ENCODE measurements at regions of chr2 and their contacts with region 1.

Region 1: DNA sequence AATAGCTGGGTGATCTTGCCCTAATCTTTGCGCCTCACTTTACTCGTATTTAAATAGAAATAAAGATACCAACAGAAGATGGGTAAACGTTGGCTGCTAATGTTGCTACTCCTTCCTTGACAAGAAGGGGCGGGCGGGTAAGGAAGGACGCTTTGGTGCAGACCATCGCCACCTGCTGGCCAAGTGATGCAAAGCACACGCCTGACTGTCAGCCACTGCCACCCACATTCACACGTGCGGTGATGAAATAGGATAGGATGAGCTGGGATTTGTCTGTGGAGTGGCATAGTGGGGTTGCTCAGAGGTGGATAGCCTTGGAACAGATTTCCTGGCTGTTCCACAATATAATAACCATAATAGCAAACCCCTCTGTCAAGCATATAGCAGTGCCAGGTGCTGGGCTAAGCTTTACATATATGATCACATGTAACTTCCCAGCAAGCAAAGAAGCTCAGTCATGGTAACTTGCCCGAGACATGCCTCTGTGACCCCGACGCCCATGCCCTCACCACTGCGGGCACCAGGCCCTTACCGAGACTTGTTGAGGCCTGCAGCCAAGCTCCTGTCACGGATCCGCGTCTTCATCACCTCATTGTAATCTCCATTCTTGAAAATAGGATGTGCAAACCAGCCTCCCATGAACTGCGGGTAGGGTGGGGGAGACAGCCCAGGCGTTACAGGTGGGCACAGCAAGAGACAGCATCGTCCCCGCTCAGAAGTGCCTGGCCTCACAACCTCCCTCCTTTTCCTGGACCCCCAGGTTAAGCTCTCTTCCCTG is 39.3 kb downstream of the LCT start:
- DNase-seq: peak; percentile 48
- ATAC-seq: peak; percentile 90
- H3K4me3 ChIP-seq: no peak overlapping the region
- H3K27ac ChIP-seq: no peak overlapping the region
- H3K4me1 ChIP-seq: no peaks in the 10 kb centered on the region
- H3K27me3 ChIP-seq: no peaks in the 10 kb centered on the region
- CTCF ChIP-seq: peak; percentile 97

Region 2: DNA sequence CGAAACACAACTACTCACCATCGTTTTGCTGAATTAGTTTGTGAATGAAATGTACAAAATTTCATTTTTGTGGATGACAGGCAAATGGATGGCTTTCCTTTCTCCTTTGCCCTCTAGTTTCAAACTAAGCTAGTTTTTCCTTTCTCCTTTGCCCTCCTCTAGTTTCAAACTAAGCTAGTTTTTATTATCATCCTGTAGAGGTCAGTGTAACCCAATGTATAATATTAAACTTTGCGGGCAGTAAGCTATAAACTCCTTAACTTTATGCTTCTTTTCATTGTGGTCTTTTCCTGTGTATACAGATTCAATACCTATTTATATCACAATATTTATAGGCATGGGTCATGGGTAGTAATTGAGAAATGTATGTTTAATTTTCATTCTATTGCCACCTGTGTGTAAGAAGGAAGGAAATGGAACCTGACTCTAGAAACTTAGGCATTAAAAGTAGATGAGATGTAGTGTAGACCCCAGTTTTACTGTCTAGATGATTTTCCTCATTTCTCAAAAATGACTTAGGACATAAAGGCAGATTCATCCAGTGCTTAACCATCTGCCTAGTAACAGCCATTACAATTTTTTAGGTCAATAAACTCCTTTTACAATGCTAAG is 808.6 kb before region 1 on chr2:
- CTCF ChIA-PET with region 1: interaction called, 5 read pairs
- POLR2A ChIA-PET with region 1: no interaction called
- in situ Hi-C with region 1: no loop called
- intact Hi-C with region 1: loop called (anchors 5 kb)
- DNase-seq: peak; percentile 22
- ATAC-seq: peak; percentile 84; the same call in 1 of the 2 replicates
- H3K4me3 ChIP-seq: no peak overlapping the region
- H3K27ac ChIP-seq: no peak overlapping the region
- H3K4me1 ChIP-seq: no peaks in the 10 kb centered on the region
- H3K27me3 ChIP-seq: peaks cover 11% of the 10 kb centered on the region; the same call in 1 of the 2 replicates
- CTCF ChIP-seq: peak; percentile 58; the same call in 1 of the 2 replicates

Region 3: DNA sequence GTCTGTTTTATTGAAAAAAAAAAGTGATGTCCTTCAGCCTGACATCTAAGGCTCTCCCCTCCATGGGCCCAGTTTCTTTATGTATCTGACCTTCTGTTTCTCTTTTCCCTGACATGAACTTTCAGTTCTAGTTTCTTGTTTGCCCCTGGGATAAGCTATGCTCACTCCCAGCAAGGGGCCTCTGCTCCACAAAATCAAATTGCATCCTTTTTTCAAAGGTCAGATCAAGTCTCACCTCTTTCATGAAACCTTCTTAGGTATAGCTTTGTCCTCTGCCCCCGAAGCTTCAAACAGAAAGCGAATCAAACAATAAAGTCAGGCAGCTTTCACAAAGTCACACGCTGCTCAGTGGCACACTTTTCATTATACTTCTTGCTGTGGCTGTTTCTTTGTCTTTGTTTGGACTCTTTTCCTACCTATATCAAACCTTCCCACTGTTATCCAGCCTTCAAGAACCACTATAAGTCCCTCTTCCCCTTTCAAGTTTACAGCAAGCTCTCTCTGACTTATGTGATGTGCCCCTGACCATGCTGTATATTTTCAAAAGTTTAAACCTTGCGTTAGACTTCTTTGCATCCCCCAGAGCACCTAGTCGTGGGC is 773.7 kb before region 1 on chr2:
- CTCF ChIA-PET with region 1: interaction called, 10 read pairs
- POLR2A ChIA-PET with region 1: no interaction called
- in situ Hi-C with region 1: no loop called
- intact Hi-C with region 1: no loop called
- DNase-seq: no peak
- ATAC-seq: no peak
- H3K4me3 ChIP-seq: no peak overlapping the region
- H3K27ac ChIP-seq: no peak overlapping the region
- H3K4me1 ChIP-seq: no peaks in the 10 kb centered on the region
- H3K27me3 ChIP-seq: no peaks in the 10 kb centered on the region
- CTCF ChIP-seq: no peak